Posterior vena cava (tissue), 2 donors: ENCODE measurements at regions of chr6 and their contacts with region 1.

Region 1: DNA sequence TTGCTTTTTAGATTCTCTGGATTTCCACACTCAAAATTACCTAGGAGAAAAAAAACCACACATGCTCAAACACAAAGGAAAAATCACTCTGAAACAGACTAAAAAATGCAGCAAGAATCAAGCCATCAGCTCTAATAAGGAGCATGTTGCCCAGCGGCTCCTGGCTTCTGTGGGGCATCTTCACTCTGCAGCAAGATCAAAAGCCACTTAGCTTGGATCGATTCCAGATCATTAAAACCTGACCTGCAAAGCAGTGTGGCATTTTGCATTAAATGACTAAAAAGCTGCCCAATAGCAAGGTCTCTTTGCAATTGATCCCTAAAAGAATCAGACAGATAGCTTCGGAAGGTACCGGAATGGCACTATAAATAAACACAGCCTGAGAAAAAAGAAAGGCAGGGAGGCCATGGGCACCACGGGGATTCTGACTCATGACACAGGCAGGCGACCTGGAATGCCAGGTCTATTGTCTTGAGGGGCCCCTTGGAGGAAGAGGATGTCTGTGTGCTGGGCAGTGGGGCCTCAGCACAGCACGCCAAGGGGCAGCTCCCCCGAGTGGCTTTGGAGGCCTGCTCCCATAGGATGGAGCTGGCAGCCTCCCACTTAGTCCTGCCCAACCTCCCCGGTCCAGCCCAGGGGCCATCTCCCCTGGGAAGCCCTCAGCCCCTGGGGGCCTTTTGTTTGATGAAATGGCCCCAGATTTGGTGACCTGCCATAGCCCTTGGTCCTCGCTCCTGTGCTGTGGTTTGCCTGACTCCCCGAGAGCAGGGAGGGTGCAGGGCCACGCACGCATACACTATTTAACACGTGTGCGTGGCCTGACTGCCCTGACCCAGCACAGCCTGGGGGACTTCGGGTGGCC is 7.6 kb downstream of the LEMD2 start:
- DNase-seq: no peak

Region 2: DNA sequence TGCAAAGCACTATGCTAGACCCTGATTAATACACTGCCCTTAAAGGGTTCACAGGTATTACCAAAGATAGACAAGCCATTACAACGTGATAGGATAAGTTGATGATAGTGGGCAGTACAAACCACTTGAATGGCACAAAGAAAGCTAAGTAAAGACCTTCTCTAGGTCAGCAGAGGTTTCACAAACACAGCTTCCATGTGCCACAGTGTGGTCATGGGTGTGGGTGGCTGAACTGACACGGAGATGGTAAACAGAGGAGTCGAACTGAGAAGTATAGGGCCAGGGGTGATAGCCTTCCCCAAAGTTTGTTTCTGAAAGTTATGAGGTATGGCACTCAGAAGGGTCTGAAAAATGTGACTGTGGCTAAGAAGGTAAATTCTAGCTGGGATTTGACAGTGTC is 322.7 kb before region 1 on chr6:
- intact Hi-C with region 1: no loop called
- DNase-seq: no peak

Region 3: GRCh38 chr6:33751771-33752645 is 29.3 kb before region 1 on chr6:
- intact Hi-C with region 1: loop called in 1 of 2 experiments (anchors 1 kb)
- DNase-seq: no peak

Region 4: DNA sequence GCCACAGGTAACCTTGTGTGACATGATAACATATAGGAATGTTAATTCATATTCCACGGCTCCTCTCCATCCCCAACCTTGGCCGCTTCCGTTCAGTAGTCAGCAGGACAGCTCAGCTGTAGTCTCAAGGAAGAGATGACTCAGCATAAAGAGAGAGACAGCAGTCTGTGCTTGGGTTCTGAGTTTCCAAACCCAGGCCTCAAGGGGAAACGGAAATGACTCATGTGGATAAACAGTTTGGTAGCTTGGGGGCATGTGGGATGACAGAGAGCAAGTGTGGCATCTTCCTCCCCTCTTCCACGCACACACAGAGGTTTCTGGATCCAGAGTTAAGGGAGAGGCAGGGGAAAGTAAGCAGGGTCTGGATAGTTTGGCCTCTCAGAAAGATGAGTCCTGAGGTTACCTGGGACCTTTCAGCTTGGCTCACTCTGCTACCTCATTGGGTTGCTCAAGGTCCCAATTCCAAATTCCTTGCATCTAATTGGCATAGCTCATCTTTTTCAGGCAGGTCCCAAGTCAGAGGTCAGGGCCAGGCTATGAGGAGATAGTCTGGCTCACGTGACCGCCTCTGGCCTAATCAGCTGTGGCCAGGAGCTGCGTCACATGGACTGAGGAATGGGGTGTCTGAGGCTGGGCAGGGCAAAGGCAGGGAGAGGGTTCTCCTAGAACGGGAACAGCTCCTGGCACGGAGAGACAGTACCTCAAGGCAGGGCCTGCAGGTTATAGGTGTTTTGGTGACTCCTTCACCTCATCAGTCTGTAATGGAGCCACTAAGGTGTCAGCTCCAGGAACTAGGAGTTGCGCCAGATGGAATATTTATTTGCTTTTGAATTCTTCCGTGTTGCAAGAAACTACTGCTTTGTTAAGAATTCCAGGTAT is 58.9 kb after region 1 on chr6:
- intact Hi-C with region 1: no loop called
- DNase-seq: no peak